B cell (primary cell): ENCODE measurements at regions of chr3 and their contacts with region 1.

Region 1: GRCh38 chr3:13012228-13012691 is 61.0 kb downstream of the IQSEC1 start:
- DNase-seq: peak; percentile 88
- ATAC-seq: peak; percentile 31
- H3K4me3 ChIP-seq: peak overlapping the region in 2 of 5 experiments; percentile 3 to 6
- H3K4me3 Mint-ChIP-seq: peak overlapping the region; percentile 86
- H3K27ac ChIP-seq: peak overlapping the region; percentile 96 to 97
- H3K27ac Mint-ChIP-seq: peak overlapping the region; percentile 95
- H3K4me1 ChIP-seq: peaks cover 98 to 100% of the 10 kb centered on the region in 2 donors
- H3K4me1 Mint-ChIP-seq: peaks cover 95% of the 10 kb centered on the region
- H3K27me3 ChIP-seq: no peaks in the 10 kb centered on the region
- H3K27me3 Mint-ChIP-seq: no peaks in the 10 kb centered on the region
- CTCF ChIP-seq: no peak

Region 2: DNA sequence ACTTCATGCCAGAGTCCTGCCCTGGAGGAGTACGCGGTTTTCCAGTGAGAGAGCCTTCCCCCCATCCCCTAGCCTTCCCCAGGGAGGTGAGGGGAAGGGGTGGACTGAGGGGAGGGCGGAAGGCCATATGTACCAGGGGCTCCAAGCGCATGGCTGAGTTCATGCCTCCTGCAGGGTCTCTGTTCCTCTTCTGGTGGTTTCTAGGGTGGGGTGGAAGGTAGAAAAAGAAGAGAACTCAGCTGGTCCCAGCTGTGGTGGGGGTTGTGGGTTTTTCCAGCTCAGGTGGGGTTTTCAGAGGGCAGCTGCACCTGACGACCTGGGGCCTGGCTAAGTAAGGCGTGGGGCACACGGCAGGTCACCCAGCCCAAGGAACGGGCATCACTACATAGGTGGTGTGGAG is 71.6 kb after region 1 on chr3:
- CTCF ChIA-PET with region 1: interaction called, 4 read pairs
- POLR2A ChIA-PET with region 1: interaction called, 7 read pairs
- intact Hi-C with region 1: loop called (anchors 2 kb)
- DNase-seq: peak; percentile 89
- ATAC-seq: peak; percentile 58
- H3K4me3 ChIP-seq: peak overlapping the region in 1 of 5 experiments; percentile 17
- H3K4me3 Mint-ChIP-seq: peak overlapping the region; percentile 82
- H3K27ac ChIP-seq: peak overlapping the region; percentile 86 to 94
- H3K27ac Mint-ChIP-seq: peak overlapping the region; percentile 95
- H3K4me1 ChIP-seq: peaks cover 83 to 98% of the 10 kb centered on the region in 2 donors
- H3K4me1 Mint-ChIP-seq: peaks cover 90% of the 10 kb centered on the region
- H3K27me3 ChIP-seq: no peaks in the 10 kb centered on the region
- H3K27me3 Mint-ChIP-seq: no peaks in the 10 kb centered on the region
- CTCF ChIP-seq: no peak

Region 3: DNA sequence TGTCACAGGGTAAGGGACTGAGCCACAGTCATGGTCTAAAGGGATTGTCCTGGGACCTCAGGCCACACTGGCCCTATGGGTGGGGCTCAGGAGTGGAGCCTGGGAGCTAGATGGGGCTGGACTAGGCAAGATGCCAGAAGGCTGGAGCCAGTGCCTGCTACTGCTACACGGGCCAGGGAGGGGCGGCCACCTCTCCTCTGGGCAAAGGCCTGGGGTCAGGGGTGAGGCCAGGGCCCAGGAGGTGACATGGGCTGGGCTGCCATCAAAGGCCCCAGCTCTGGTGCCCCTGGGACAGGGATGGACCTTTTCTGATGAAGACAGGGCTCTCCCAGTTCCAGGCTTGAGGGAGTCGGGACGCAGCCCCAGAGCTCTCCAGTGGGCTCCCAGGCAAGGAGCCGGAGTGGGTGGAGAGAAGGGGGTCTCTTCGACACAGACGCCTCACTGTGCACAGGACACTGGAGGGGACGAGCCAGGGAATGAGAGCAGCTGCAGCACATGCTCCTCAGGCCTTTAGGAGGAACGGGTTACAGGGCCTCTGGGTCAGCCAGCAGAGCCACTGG is 123.1 kb after region 1 on chr3:
- CTCF ChIA-PET with region 1: no interaction called
- POLR2A ChIA-PET with region 1: no interaction called
- intact Hi-C with region 1: no loop called
- DNase-seq: no peak
- ATAC-seq: no peak
- H3K4me3 ChIP-seq: no peak overlapping the region
- H3K4me3 Mint-ChIP-seq: no peak overlapping the region
- H3K27ac ChIP-seq: no peak overlapping the region
- H3K27ac Mint-ChIP-seq: no peak overlapping the region
- H3K4me1 ChIP-seq: no peaks in the 10 kb centered on the region
- H3K4me1 Mint-ChIP-seq: no peaks in the 10 kb centered on the region
- H3K27me3 ChIP-seq: peaks cover 0 to 13% (median 1%) of the 10 kb centered on the region in 4 experiments
- H3K27me3 Mint-ChIP-seq: peaks cover 33% of the 10 kb centered on the region
- CTCF ChIP-seq: no peak